CD4-positive, alpha-beta memory T cell (primary cell): ENCODE measurements at regions of chr3 and their contacts with region 1.

Region 1: DNA sequence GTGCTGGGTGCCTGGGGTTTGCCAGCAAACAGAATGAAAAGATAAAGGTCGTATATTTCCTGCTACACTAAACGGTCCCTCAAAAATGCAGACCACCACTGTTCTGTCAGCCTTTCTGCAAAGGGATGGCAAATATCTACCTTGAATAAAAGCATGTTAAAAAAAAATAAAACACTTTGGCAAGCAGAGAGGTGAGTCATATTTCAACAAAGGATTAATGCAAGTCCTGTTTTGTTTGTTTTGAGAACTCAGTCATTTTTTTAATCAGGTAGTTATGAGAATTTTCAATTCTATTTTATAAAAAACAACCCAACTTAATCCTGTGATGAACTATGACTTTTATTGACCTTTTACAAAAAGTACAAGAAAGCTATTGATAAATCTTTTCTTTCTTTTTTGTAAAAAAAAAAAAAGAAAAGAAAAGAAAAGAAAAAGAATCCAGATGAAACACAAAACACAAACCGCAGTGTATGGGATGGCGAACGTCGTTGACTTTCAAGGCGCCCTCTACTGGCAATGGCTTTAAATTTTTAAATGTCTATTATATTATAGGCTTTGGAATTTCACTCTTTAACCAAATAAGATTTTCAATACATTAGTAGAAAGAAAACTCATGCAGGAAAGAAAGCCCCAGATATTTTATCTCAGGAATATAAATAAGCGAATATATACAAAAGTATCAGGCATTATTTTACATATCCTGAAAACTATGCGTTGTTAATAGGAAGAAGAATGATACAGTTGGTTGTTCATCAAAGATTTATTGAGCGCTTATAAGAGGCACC is 87.8 kb downstream of the NCEH1 start:
- DNase-seq: peak in 4 of 5 donors; percentile 21 to 37 (median 30)
- H3K4me3 ChIP-seq: no peak overlapping the region
- H3K4me3 Mint-ChIP-seq: peak overlapping the region in 1 of 8 donors; percentile 68
- H3K27ac ChIP-seq: no peak overlapping the region
- H3K27ac Mint-ChIP-seq: no peak overlapping the region
- H3K4me1 ChIP-seq: no peaks in the 10 kb centered on the region
- H3K4me1 Mint-ChIP-seq: peaks cover 0 to 4% (median 2%) of the 10 kb centered on the region in 4 donors
- H3K27me3 ChIP-seq: no peaks in the 10 kb centered on the region
- H3K27me3 Mint-ChIP-seq: no peaks in the 10 kb centered on the region

Region 2: GRCh38 chr3:172461530-172462138 is 161.5 kb before region 1 on chr3:
- CTCF ChIA-PET with region 1: interaction called, 49 read pairs
- POLR2A ChIA-PET with region 1: no interaction called
- intact Hi-C with region 1: loop called (anchors 1 kb)
- DNase-seq: peak in 4 of 5 donors; percentile 20 to 39 (median 28)
- H3K4me3 ChIP-seq: no peak overlapping the region
- H3K4me3 Mint-ChIP-seq: no peak overlapping the region
- H3K27ac ChIP-seq: no peak overlapping the region
- H3K27ac Mint-ChIP-seq: no peak overlapping the region
- H3K4me1 ChIP-seq: no peaks in the 10 kb centered on the region
- H3K4me1 Mint-ChIP-seq: peaks cover 0 to 3% (median 1%) of the 10 kb centered on the region in 4 donors
- H3K27me3 ChIP-seq: no peaks in the 10 kb centered on the region
- H3K27me3 Mint-ChIP-seq: peaks cover 0 to 2% of the 10 kb centered on the region in 2 donors

Region 3: GRCh38 chr3:172607305-172608121 is 15.6 kb before region 1 on chr3:
- CTCF ChIA-PET with region 1: interaction called, 40 read pairs
- POLR2A ChIA-PET with region 1: no interaction called
- intact Hi-C with region 1: no loop called
- DNase-seq: no peak
- H3K4me3 ChIP-seq: no peak overlapping the region
- H3K4me3 Mint-ChIP-seq: no peak overlapping the region
- H3K27ac ChIP-seq: no peak overlapping the region
- H3K27ac Mint-ChIP-seq: no peak overlapping the region
- H3K4me1 ChIP-seq: no peaks in the 10 kb centered on the region
- H3K4me1 Mint-ChIP-seq: no peaks in the 10 kb centered on the region
- H3K27me3 ChIP-seq: no peaks in the 10 kb centered on the region
- H3K27me3 Mint-ChIP-seq: no peaks in the 10 kb centered on the region

Region 4: GRCh38 chr3:172635588-172635987 is 12.5 kb after region 1 on chr3:
- CTCF ChIA-PET with region 1: interaction called, 36 read pairs
- POLR2A ChIA-PET with region 1: no interaction called
- intact Hi-C with region 1: no loop called
- DNase-seq: no peak
- H3K4me3 ChIP-seq: no peak overlapping the region
- H3K4me3 Mint-ChIP-seq: no peak overlapping the region
- H3K27ac ChIP-seq: no peak overlapping the region
- H3K27ac Mint-ChIP-seq: no peak overlapping the region
- H3K4me1 ChIP-seq: no peaks in the 10 kb centered on the region
- H3K4me1 Mint-ChIP-seq: peaks cover 0 to 6% (median 2%) of the 10 kb centered on the region in 4 donors
- H3K27me3 ChIP-seq: no peaks in the 10 kb centered on the region
- H3K27me3 Mint-ChIP-seq: no peaks in the 10 kb centered on the region